Heart left ventricle (tissue), 16 donors: ENCODE measurements at regions of chr6 and their contacts with region 1.

Region 1: DNA sequence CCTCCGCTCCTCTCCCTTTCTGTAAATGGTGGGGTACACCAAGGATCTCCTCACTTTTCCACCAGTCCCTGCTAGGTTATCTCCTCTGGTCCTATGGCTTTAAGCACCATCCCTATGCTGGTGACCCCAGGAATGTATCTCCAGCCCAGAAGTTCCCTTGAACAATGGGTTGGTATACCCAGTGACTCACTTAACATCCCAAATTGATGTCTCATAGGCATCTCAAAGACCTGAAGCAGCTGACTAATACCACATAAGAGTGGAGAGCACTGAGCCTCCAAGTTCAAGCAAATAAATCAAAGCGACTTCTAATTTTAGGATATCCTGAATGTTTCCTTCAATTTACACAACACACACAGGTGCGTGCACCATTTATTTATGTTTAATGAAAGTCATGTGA is 48.3 kb downstream of the ADGRF1 start:
- DNase-seq: no peak
- ATAC-seq: no peak
- H3K4me3 ChIP-seq: no peak overlapping the region
- H3K27ac ChIP-seq: no peak overlapping the region
- H3K4me1 ChIP-seq: peaks cover 0 to 25% (median 16%) of the 10 kb centered on the region in 12 donors
- H3K27me3 ChIP-seq: no peaks in the 10 kb centered on the region
- CTCF ChIP-seq: no peak
- POLR2A ChIP-seq: no peak

Region 2: DNA sequence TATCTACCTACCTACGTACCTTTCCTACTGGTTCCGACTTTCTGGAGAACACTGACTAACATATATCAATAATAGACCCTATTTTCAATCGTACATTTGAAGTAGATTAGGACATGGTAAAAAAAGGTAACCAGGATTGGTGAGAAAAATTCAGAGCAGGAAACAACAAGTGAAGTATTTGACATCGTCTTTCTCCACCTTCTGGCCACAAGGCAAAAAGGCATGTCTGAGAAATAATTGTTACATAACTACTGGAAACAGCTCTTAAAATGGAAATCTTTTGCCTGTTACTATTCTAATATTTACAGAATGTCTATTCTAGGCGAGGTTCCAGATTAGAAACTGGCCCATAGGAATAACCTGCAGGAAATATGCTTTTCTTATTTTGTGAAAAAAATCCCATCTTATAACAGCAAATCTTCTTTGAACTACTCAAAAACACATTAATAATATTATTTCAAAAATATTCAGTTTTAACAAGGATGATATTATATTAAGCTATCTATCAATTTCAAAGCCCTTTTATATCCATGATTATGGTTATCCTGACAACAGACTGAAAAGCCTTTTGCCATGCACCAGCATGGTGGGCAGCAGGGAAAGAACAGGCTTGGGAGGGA is 583.4 kb before region 1 on chr6:
- intact Hi-C with region 1: loop called in 3 of 10 experiments (anchors 5 to 10 kb)
- DNase-seq: peak in 2 of 5 donors; percentile 16 to 26
- ATAC-seq: peak in 1 of 4 donors; percentile 17
- H3K4me3 ChIP-seq: no peak overlapping the region
- H3K27ac ChIP-seq: peak overlapping the region in 10 of 12 donors; percentile 4 to 63 (median 42)
- H3K4me1 ChIP-seq: peaks cover 3 to 69% (median 40%) of the 10 kb centered on the region in 12 donors
- H3K27me3 ChIP-seq: no peaks in the 10 kb centered on the region
- CTCF ChIP-seq: peak; percentile 57 to 91 (median 78)
- POLR2A ChIP-seq: no peak

Region 3: DNA sequence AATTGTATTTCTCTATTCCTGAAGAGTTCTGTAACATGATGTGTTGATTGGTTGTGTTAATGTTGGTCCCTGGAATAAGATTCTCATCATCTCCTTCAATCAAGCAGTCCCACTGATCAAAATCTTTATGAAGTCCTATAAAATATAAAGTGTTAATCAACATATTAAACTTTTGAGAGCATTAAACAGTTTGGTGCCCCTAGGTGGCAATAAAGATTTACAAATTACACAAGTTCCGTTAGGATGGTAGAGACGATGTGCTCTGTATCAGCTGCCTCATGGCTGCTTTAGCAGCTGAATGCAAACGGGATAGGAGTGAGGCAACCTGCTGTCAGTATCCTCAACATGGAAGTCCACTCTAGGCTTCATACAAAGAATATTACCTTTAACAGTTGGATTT is 289.3 kb before region 1 on chr6:
- intact Hi-C with region 1: loop called in 1 of 10 experiments (anchors 5 kb)
- DNase-seq: no peak
- ATAC-seq: peak in 3 of 4 donors; percentile 41 to 75 (median 56)
- H3K4me3 ChIP-seq: no peak overlapping the region
- H3K27ac ChIP-seq: no peak overlapping the region
- H3K4me1 ChIP-seq: peaks cover 0 to 7% (median 0%) of the 10 kb centered on the region in 12 donors
- H3K27me3 ChIP-seq: no peaks in the 10 kb centered on the region
- CTCF ChIP-seq: peak in 7 of 12 donors; percentile 12 to 34 (median 18)
- POLR2A ChIP-seq: no peak

Region 4: DNA sequence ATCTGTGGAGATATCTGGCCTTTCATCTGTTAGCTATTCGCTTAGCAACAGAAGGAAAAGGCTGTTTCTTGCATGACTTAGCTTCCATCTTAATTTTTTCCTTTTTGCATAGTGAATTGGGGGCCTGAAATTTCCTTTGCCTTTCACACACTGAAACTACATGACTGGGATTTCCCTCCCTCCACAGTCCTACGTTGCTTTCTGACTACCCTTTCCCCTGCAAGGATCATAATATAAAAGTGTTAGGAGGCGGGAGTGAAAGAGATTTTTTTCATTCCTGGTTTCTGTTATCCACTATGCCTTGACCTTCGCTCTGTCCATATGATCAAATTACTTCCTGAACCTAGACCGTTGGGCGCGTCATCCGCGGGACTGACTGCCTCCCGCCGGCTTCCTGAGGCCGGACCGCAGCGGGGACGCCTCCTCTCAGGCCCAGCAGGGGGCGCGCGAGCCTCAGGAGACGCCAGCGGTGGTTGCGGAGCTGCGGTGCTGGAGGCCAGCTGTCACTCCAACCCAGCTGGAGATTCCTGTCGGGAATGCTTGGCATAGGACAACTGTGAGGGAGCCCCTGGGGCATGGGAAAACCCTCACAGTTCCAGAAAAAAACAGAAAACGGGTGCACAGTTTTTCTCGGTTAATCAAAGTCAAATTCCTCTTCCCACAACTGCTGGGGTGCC is 145.0 kb before region 1 on chr6:
- intact Hi-C with region 1: loop called (anchors 1 to 5 kb)
- DNase-seq: peak; percentile 84 to 94 (median 87)
- ATAC-seq: peak; percentile 65 to 96 (median 95)
- H3K4me3 ChIP-seq: peak overlapping the region in 5 of 12 donors; percentile 3 to 32 (median 26)
- H3K27ac ChIP-seq: no peak overlapping the region
- H3K4me1 ChIP-seq: peaks cover 0 to 44% (median 13%) of the 10 kb centered on the region in 12 donors
- H3K27me3 ChIP-seq: no peaks in the 10 kb centered on the region
- CTCF ChIP-seq: peak; percentile 93 to 99 (median 98)
- POLR2A ChIP-seq: no peak

Region 5: DNA sequence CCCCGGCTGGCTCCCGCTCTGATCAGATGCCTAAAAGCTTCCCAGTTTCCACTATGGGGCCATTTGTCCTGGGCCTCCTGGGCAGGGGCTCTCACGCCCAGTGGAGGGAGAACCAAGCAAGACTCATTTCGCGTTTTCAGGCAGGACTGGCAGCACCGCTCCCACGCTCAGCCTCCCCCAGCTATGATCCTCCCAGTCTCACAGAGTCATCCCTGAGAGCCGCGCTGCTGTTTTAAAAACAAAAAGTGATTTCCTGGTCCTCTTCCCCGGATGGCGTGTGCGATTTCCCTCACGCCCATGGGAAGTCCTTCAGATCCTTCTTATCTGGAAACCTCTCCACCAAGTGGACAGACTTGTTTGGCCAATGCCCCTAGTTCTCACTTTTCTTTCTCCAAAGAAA is 72.1 kb before region 1 on chr6 and contains the start of gene ADGRF5:
- intact Hi-C with region 1: loop called in 1 of 10 experiments (anchors 1 kb)
- DNase-seq: peak; percentile 51 to 68 (median 57)
- ATAC-seq: peak; percentile 51 to 78 (median 64)
- H3K4me3 ChIP-seq: peak within 1 kb of the TSS; percentile 24 to 72 (median 53)
- H3K27ac ChIP-seq: peak within 1 kb of the TSS; percentile 70 to 93 (median 88)
- H3K4me1 ChIP-seq: peaks cover 0 to 58% (median 18%) of the 10 kb centered on the region in 12 donors
- H3K27me3 ChIP-seq: no peaks in the 10 kb centered on the region
- CTCF ChIP-seq: no peak
- POLR2A ChIP-seq: peak in 1 of 2 donors; percentile 61
- total RNA-seq, gene ADGRF5: 27.3 to 89.6 (median 47.6) TPM

Region 6: DNA sequence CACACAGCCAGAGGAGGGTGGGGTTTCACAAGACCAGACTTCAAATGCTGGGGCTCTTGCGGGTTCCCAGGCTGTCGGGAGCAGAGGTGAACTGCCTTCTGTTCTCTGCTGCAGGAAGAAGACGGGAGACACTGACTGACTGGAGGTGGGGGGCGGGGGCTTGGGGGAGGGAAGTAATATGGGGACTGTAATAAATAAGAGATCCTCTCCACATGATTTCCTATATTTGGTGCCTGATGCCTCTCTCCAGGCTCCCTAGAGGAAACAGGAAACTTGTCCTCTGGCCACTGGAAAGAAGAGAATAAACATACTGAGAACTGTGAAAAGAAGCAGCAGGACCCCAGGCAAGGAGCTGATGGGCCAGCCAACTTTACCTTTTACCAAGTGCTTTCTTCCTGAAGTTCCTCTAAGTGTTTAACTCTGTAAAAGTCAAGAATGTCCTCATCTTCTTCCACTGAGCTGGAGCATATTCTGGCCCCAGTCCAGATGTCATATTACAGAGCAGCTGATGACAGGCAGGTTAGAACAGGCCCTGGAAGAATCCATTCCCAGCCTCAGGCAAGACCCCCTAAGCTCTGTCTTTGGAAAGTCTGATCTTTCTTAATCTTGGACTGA is 38.9 kb before region 1 on chr6:
- intact Hi-C with region 1: loop called in 2 of 10 experiments (anchors 2 to 5 kb)
- DNase-seq: peak in 2 of 5 donors; percentile 33 to 35
- ATAC-seq: peak in 2 of 4 donors; percentile 33 to 38
- H3K4me3 ChIP-seq: peak overlapping the region in 10 of 12 donors; percentile 19 to 54 (median 41)
- H3K27ac ChIP-seq: peak overlapping the region in 10 of 12 donors; percentile 36 to 89 (median 56)
- H3K4me1 ChIP-seq: peaks cover 0 to 31% (median 12%) of the 10 kb centered on the region in 12 donors
- H3K27me3 ChIP-seq: no peaks in the 10 kb centered on the region
- CTCF ChIP-seq: no peak
- POLR2A ChIP-seq: no peak